Activated T-helper 2 cell treated with anti-CD3 and anti-CD28 coated beads, Interferon-gamma antibody, Interleukin-2, Interleukin-4, amounts not matched to agents 10 μg/mL and 5 μg/mL and 100 μg/mL, durations not matched to agents 14 hours and 24 hours and 36 hours (primary cell): ENCODE measurements at regions of chrX and their contacts with region 1.

Region 1: GRCh38 chrX:80876877-80877276 is 67.2 kb upstream of the BRWD3 start:
- DNase-seq: no peak
- H3K4me3 Mint-ChIP-seq: no peak overlapping the region
- H3K27ac Mint-ChIP-seq: no peak overlapping the region
- H3K4me1 Mint-ChIP-seq: no peaks in the 10 kb centered on the region
- H3K27me3 Mint-ChIP-seq: no peaks in the 10 kb centered on the region

Region 2: GRCh38 chrX:81195712-81196111 is 318.8 kb after region 1 on chrX:
- intact Hi-C with region 1: loop called (anchors 2 kb)
- DNase-seq: peak; percentile 19
- H3K4me3 Mint-ChIP-seq: no peak overlapping the region
- H3K27ac Mint-ChIP-seq: no peak overlapping the region
- H3K4me1 Mint-ChIP-seq: peaks cover 13% of the 10 kb centered on the region
- H3K27me3 Mint-ChIP-seq: no peaks in the 10 kb centered on the region

Region 3: DNA sequence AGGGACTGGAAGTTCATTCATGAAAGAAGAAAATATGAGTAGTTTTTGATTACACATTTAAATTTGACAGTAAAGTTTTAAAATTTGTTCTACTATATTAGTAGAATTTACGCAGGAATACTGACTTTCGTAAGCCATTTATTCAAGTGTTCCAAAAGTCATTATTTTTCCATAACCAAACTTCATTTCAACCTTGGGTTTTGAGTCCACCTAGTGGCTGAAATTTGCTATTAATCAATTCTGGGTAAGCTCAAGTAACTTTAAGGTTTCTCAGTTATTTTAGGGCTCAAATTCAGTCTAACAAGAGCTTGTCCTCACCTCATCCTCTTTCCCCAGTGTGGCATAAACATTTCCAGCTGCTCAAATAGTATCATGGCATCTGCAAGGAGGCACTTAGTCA is 500.5 kb after region 1 on chrX:
- intact Hi-C with region 1: loop called (anchors 2 kb)
- DNase-seq: no peak
- H3K4me3 Mint-ChIP-seq: no peak overlapping the region
- H3K27ac Mint-ChIP-seq: no peak overlapping the region
- H3K4me1 Mint-ChIP-seq: no peaks in the 10 kb centered on the region
- H3K27me3 Mint-ChIP-seq: no peaks in the 10 kb centered on the region